ENCODE measurements at regions of chr1 and their contacts with region 1.

Region 1: DNA sequence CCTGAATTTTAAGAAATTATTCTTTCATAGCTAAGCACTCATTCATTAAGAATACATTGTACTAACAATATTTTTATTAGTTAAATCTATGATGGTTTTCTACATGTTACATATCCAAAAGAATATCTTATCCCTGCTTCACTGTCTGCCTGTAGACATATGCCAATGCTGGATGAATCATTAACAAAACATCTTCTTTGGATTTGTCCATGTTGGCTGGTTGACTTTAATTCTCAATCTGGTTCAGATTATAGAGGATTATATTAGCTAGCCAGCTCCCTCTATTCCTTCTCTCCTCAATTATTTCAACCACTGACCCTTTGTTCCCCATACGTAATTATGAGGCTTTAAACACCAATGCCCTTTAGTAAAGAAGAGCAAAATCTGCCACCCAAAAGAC is 138.9 kb upstream of the DMRTA2 start:
- DNase-seq: no peak
- ATAC-seq: no peak
- H3K4me3 ChIP-seq: no peak overlapping the region
- H3K4me3 Mint-ChIP-seq: no peak overlapping the region
- H3K27ac ChIP-seq: no peak overlapping the region
- H3K27ac Mint-ChIP-seq: no peak overlapping the region
- H3K4me1 ChIP-seq: no peaks in the 10 kb centered on the region
- H3K4me1 Mint-ChIP-seq: no peaks in the 10 kb centered on the region
- H3K27me3 ChIP-seq: no peaks in the 10 kb centered on the region
- H3K27me3 Mint-ChIP-seq: no peaks in the 10 kb centered on the region
- CTCF ChIP-seq: no peak

Region 2: GRCh38 chr1:50332941-50333594 is 229.0 kb before region 1 on chr1:
- intact Hi-C with region 1: no loop called
- DNase-seq: peak; percentile 42 to 65
- ATAC-seq: peak; percentile 76 to 84 (median 84)
- H3K4me3 ChIP-seq: peak overlapping the region; percentile 34
- H3K4me3 Mint-ChIP-seq: peak overlapping the region; percentile 76
- H3K27ac ChIP-seq: no peak overlapping the region
- H3K27ac Mint-ChIP-seq: no peak overlapping the region
- H3K4me1 ChIP-seq: peaks cover 9% of the 10 kb centered on the region
- H3K4me1 Mint-ChIP-seq: no peaks in the 10 kb centered on the region
- H3K27me3 ChIP-seq: peaks cover 13% of the 10 kb centered on the region
- H3K27me3 Mint-ChIP-seq: peaks cover 26 to 42% of the 10 kb centered on the region in 2 donors
- CTCF ChIP-seq: peak; percentile 75

Region 3: DNA sequence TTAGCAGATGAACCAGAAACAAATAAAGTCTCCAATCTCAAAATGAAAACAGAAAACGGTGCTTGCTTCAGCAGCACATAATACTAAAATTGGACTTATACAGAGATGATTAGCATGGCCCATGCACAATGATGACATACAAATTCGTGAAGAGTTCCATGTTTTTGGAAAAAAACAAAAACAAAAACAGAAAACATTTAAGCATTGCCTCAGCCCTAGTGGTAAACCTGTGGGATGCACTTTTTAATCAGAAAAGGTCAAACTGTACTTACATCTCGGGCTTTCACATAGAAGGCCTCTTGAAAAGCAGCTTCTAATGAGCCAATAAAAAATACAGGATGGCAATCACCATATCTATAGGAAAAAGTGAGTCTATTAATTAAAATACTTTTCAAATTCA is 20.2 kb after region 1 on chr1:
- intact Hi-C with region 1: loop called (anchors 2 kb)
- DNase-seq: no peak
- ATAC-seq: no peak
- H3K4me3 ChIP-seq: no peak overlapping the region
- H3K4me3 Mint-ChIP-seq: no peak overlapping the region
- H3K27ac ChIP-seq: no peak overlapping the region
- H3K27ac Mint-ChIP-seq: no peak overlapping the region
- H3K4me1 ChIP-seq: no peaks in the 10 kb centered on the region
- H3K4me1 Mint-ChIP-seq: no peaks in the 10 kb centered on the region
- H3K27me3 ChIP-seq: no peaks in the 10 kb centered on the region
- H3K27me3 Mint-ChIP-seq: no peaks in the 10 kb centered on the region
- CTCF ChIP-seq: no peak

Measured in natural killer cell (primary cell).